PC-9 (cell line): ENCODE measurements at regions of chr6 and their contacts with region 1.

Region 1: DNA sequence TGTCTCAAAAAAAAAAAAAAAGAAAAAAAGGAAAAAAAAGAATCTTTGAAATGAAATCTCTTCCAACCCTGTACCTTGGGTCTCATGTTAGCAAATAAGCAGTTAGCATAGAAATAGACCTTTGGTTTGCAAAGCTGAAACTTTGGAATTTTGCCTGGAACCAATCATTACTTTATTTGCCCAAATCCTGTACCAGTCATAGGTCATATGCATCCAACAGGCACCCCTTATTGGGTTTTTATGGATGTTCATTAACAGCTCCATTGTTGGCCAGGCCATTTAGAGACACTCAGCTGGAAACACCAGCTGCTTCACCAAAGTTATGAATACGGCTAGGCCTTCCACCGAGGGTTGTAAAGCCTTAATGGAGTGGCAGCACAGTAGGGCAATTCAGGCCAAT is 53.0 kb downstream of the ALDH8A1 start:
- DNase-seq: no peak
- H3K4me3 ChIP-seq: no peak overlapping the region
- H3K27ac ChIP-seq: no peak overlapping the region
- H3K4me1 ChIP-seq: no peaks in the 10 kb centered on the region
- H3K27me3 ChIP-seq: peaks cover 12% of the 10 kb centered on the region; the same call in 1 of the 2 replicates
- CTCF ChIP-seq: no peak

Region 2: DNA sequence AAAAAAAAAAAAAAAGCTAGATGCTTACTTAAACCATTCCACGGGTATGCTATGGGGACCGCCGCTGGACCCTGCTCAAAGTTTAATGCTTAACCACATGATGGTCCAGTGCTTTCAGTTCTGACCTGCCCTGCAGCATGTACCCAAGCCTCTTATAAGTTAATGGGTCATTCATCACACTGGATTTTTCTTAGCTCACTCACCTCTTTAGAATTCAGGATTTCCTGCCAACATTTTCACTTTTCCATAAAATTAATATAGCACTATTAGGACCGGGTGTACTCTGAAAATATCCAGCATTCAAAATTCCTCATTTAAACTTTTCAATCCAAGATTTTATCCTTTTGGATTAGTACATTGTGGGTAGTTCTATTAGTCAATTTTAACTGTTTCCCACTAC is 87.8 kb before region 1 on chr6:
- CTCF ChIA-PET with region 1: no interaction called
- POLR2A ChIA-PET with region 1: interaction called, 19 read pairs
- intact Hi-C with region 1: no loop called
- DNase-seq: peak in 1 of 2 experiments; percentile 19
- H3K4me3 ChIP-seq: no peak overlapping the region
- H3K27ac ChIP-seq: no peak overlapping the region
- H3K4me1 ChIP-seq: peaks cover 13% of the 10 kb centered on the region
- H3K27me3 ChIP-seq: no peaks in the 10 kb centered on the region
- CTCF ChIP-seq: no peak